HepG2 (cell line): ENCODE measurements at regions of chr20 and their contacts with region 1.

Region 1: DNA sequence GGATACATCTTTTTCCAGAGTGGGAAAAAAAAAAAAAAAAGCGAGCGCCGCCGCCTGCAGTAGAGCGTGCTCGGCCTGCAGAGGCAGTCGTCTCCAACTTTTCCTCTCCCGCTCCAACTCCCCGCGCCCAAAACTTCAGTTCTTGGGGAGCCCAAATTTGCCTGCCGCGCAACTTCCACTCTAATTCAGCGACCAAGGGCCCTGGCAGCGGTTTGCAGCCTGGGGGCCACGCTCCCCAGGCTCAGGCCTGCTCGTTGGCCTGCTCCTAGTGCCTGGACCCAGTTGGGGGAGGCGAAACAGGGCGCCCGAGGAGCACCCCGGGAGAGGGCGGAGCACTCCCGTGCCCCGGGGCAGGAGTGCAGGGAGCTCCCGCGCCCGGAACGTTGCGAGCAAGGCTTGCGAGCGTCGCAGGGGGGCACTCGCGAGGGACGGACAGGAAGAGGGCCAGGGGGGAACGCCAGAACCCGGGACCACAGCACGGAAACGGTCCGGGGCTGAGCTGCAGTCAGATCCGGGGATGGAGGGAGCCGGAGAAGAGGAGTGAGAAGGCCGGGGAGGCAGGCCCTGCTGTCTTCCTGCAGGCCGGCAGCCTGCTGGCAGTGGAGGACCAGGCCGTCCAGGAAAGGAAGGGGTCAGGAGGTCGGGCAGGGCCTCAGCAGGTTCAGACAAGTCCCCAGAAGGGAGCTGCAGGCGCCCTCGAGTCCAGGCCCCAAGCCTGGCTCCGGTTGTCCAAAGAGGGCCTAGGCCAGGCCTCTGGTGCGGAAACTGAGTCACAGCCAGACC is at the start of gene STX16:
- DNase-seq: peak; percentile 91
- ATAC-seq: peak; percentile 92
- H3K4me3 ChIP-seq: peak within 1 kb of the TSS; percentile 87 to 98 (median 95)
- H3K27ac ChIP-seq: peak within 1 kb of the TSS; percentile 79
- H3K4me1 ChIP-seq: peaks cover 48% of the 10 kb centered on the region
- H3K27me3 ChIP-seq: peaks cover 0 to 6% of the 10 kb centered on the region in 2 experiments; a peak in 2 of 5 replicates
- CTCF ChIP-seq: peak; percentile 70
- EP300 ChIP-seq: peak; percentile 78 to 94
- POLR2A ChIP-seq: peak; percentile 94 to 95
- RAD21 ChIP-seq: no peak; the same call in none of the 2 replicates
- total RNA-seq, gene STX16: 28.0 and 40.5 TPM in 2 replicates

Region 2: DNA sequence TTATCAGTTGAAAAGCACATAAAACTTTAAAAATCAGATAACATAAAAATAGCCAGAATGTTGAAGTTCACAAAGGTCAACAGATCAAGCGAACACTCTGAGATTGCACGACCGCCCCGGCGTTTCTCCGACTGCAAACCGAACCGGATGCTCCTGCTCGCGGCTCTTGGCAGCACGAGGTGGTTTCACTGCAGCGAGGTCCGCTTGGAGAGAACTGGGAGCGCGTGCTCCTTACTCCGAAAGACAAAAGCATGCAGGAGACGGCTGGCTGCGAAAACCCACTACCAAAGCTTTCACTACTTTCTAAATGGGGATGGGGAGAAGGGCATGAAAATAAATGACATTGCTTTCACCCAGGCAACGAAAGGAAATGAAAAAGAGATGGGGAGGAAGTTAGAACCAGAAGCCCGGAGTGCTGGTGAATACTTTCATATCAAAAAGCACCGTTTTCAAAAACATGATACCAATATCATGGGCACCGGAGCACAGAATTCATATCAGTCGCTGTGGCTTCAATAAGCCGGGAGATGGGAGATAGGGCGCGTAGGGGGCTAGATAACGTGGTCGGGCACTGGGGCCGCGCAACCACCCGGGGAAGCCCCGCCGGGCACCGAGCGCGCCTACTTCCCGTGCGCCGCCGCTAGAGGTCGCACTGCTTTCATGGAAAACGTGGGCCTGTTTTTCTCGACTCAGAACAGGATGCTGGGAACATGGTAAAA is 414.2 kb before region 1 on chr20:
- CTCF ChIA-PET with region 1: no interaction called
- POLR2A ChIA-PET with region 1: no interaction called
- in situ Hi-C with region 1: loop called (anchors 10 kb)
- intact Hi-C with region 1: loop called (anchors 2 kb)
- DNase-seq: peak; percentile 52
- ATAC-seq: peak; percentile 93
- H3K4me3 ChIP-seq: peak overlapping the region; percentile 10 to 59 (median 43); a peak in 5 of 6 replicates
- H3K27ac ChIP-seq: no peak overlapping the region
- H3K4me1 ChIP-seq: peaks cover 7% of the 10 kb centered on the region
- H3K27me3 ChIP-seq: peaks cover 0 to 12% of the 10 kb centered on the region in 2 experiments; a peak in 2 of 5 replicates
- CTCF ChIP-seq: peak; percentile 99
- EP300 ChIP-seq: no peak
- POLR2A ChIP-seq: no peak
- RAD21 ChIP-seq: peak; percentile 92

Region 3: DNA sequence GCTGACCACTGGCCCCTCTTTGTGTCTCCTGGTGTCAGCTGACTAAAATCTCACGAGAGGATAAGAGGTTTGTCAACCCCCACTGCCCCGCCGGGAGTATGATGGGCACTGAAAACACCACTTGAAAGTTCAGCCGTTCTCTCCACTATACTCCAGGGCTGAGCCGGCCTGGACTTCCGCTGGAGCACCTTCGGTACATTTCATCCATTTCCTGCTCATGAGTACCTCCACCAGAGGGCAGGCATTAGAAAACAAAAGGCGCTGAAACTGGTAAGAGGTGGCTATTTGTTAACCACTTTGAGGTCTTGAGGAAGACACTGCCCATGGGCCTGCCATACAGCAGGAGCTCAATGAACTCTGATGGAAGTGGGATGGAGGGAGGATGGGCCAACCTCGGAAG is 404.6 kb before region 1 on chr20:
- CTCF ChIA-PET with region 1: no interaction called
- POLR2A ChIA-PET with region 1: no interaction called
- in situ Hi-C with region 1: loop called (anchors 10 kb)
- intact Hi-C with region 1: no loop called
- DNase-seq: peak; percentile 61
- ATAC-seq: peak; percentile 75
- H3K4me3 ChIP-seq: no peak overlapping the region
- H3K27ac ChIP-seq: no peak overlapping the region
- H3K4me1 ChIP-seq: peaks cover 2% of the 10 kb centered on the region; the same call in 1 of the 2 replicates
- H3K27me3 ChIP-seq: no peaks in the 10 kb centered on the region
- CTCF ChIP-seq: peak; percentile 71
- EP300 ChIP-seq: no peak
- POLR2A ChIP-seq: no peak
- RAD21 ChIP-seq: peak; percentile 32; the same call in 1 of the 2 replicates

Region 4: DNA sequence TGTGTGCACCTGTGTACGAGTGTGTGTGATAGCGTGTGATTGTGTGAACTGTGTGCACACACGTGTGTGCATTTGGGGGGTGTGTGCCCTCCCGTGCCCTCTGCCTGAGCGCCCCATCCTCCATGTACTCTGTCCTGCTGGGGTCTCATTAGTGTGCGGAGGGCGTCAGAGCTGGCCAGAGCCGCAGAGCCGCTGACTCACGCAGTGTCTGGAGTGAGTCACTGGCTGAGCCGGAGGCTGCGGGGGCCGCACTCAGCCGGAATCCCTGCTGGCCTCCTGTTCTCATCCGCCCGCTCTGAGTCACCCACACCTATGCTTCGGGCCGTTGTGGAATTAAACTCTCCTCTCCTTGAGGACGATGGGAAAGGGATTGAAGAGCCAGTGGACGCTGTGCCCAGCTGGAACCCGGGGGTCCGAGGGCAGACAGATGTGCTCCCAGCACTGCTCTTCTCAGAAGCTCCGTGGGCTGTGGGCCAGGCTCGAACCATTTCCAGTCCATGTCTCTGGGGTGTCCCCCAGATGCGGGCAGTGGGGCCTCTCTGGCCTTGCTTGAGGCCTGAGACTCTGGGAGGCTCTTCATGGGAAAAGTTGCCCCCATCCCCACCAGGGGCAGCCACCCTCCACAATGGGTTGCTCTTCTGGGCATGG is 27.0 kb before region 1 on chr20:
- CTCF ChIA-PET with region 1: no interaction called
- POLR2A ChIA-PET with region 1: interaction called, 15 read pairs
- in situ Hi-C with region 1: no loop called
- intact Hi-C with region 1: loop called (anchors 1 kb)
- DNase-seq: peak; percentile 68
- ATAC-seq: peak; percentile 90
- H3K4me3 ChIP-seq: peak overlapping the region in 1 of 3 experiments; percentile 15; a peak in 1 of 6 replicates
- H3K27ac ChIP-seq: no peak overlapping the region
- H3K4me1 ChIP-seq: peaks cover 15% of the 10 kb centered on the region
- H3K27me3 ChIP-seq: peaks cover 1 to 94% of the 10 kb centered on the region in 2 experiments; a peak in 4 of 5 replicates
- CTCF ChIP-seq: no peak
- EP300 ChIP-seq: peak in 1 of 2 experiments; percentile 42; a peak in 1 of 4 replicates
- POLR2A ChIP-seq: no peak
- RAD21 ChIP-seq: no peak

Region 5: GRCh38 chr20:58888521-58889333 is 237.8 kb after region 1 on chr20:
- CTCF ChIA-PET with region 1: no interaction called
- POLR2A ChIA-PET with region 1: interaction called, 9 read pairs
- in situ Hi-C with region 1: no loop called
- intact Hi-C with region 1: loop called (anchors 10 kb)
- DNase-seq: peak; percentile 76
- ATAC-seq: peak; percentile 62
- H3K4me3 ChIP-seq: peak overlapping the region; percentile 78 to 98 (median 86)
- H3K27ac ChIP-seq: peak overlapping the region; percentile 49
- H3K4me1 ChIP-seq: peaks cover 24% of the 10 kb centered on the region
- H3K27me3 ChIP-seq: peaks cover 0 to 3% of the 10 kb centered on the region in 2 experiments; a peak in 2 of 5 replicates
- CTCF ChIP-seq: no peak
- EP300 ChIP-seq: no peak
- POLR2A ChIP-seq: peak; percentile 93 to 96
- RAD21 ChIP-seq: peak; percentile 33; the same call in 1 of the 2 replicates

Region 6: GRCh38 chr20:59525500-59526241 is 874.7 kb after region 1 on chr20:
- CTCF ChIA-PET with region 1: no interaction called
- POLR2A ChIA-PET with region 1: no interaction called
- in situ Hi-C with region 1: no loop called
- intact Hi-C with region 1: no loop called
- DNase-seq: peak; percentile 59
- ATAC-seq: peak; percentile 97
- H3K4me3 ChIP-seq: no peak overlapping the region
- H3K27ac ChIP-seq: no peak overlapping the region
- H3K4me1 ChIP-seq: no peaks in the 10 kb centered on the region
- H3K27me3 ChIP-seq: peaks cover 0 to 22% of the 10 kb centered on the region in 2 experiments; a peak in 1 of 5 replicates
- CTCF ChIP-seq: peak; percentile 89
- EP300 ChIP-seq: 0 out of 4 replicates have a peak, but pooled peaks of 1 of the 2 experiments have one; percentile 12
- POLR2A ChIP-seq: no peak
- RAD21 ChIP-seq: peak; percentile 67